BJ (cell line): ENCODE measurements at regions of chr5 and their contacts with region 1.

Region 1: DNA sequence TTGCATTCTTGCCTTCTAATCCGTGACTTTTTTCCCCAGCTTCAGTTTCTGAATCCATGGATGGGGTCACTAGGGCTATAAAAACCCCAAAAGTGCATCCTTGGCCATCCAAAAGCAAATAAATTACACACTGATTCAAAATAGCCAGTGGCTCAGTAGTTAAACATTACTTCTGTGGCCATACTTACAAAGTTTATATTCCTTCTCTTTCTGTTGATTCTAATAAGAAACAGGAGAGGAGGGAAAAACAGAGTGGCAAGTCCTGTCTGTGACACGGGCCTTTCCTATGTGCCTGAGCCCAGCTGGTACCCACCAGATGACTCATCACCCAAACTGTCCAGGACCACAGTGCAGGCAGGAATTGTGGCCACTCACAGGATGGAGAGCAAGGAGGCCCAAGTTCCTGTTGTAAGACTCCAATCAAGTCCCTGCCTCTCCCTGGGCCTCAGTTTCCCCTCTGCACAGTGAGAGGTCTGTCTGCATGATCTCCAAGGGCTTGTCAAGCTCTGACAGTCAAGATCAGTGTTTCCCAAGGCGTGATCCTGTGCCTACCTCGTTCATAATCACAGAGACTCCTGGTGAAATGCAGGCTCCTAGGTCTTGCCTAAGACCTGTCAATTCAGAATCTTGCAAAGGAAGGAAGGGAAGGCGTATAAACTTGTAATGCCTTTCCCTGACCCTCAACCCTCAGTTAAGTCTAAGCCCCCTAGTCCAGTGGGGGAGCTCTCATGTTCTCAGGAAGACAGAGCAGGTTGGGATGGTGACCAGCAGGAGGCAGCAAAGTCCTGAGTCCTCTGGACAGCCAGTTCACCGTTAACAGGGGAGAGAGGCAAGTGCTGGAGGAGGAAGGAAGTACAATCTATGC is 29.5 kb downstream of the TNIP1 start:
- DNase-seq: no peak
- H3K4me3 ChIP-seq: no peak overlapping the region
- H3K27me3 ChIP-seq: no peaks in the 10 kb centered on the region
- CTCF ChIP-seq: peak; percentile 84

Region 2: GRCh38 chr5:151002250-151002649 is 49.0 kb before region 1 on chr5:
- CTCF ChIA-PET with region 1: interaction called, 13 read pairs
- POLR2A ChIA-PET with region 1: no interaction called
- DNase-seq: no peak
- H3K4me3 ChIP-seq: no peak overlapping the region
- H3K27me3 ChIP-seq: peaks cover 2% of the 10 kb centered on the region
- CTCF ChIP-seq: peak; percentile 41

Region 3: DNA sequence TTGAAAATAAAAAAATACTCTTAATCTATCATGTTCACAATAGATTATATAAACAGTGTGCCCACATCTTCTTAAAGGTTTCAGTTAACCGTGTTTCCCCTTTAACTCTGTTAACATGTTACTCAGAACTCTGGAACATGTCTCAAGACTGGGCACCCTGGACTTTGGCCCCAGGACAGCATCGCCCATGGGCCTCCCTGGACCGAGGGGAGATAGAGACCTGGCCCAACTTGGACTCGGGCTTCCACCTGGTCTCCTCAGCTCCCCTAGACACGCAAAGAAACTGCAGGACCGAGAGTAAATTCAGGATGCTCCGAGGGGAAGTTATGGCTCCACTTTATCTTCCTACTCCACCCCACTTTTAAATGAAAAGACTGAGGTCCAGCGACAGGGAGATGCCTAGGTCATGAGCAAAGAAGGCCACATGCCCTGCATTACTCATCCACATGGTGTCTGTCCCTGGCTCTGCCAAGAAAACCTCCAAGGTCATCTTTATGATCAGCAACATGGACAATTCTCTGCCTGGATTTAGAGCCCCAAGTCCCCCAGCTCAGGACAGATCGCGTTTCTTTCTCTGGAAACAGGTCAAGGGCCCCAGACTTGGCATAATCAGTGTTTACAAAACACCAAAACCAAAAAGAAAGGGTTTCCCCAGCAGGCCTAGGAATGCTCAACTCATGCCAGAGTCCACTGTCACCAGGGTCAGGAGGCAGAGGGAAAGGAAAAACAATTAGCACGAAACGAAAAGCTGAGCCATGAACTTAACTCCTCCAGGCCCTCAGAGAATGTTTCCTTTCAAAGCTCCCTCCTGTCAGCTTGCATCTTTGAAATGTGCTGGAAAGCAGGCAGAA is 13.5 kb before region 1 on chr5:
- CTCF ChIA-PET with region 1: interaction called, 76 read pairs
- POLR2A ChIA-PET with region 1: no interaction called
- DNase-seq: no peak
- H3K4me3 ChIP-seq: no peak overlapping the region
- H3K27me3 ChIP-seq: no peaks in the 10 kb centered on the region
- CTCF ChIP-seq: no peak

Region 4: GRCh38 chr5:151068433-151069197 is 17.3 kb after region 1 on chr5:
- CTCF ChIA-PET with region 1: interaction called, 37 read pairs
- POLR2A ChIA-PET with region 1: no interaction called
- DNase-seq: no peak
- H3K4me3 ChIP-seq: no peak overlapping the region
- H3K27me3 ChIP-seq: no peaks in the 10 kb centered on the region
- CTCF ChIP-seq: no peak

Region 5: DNA sequence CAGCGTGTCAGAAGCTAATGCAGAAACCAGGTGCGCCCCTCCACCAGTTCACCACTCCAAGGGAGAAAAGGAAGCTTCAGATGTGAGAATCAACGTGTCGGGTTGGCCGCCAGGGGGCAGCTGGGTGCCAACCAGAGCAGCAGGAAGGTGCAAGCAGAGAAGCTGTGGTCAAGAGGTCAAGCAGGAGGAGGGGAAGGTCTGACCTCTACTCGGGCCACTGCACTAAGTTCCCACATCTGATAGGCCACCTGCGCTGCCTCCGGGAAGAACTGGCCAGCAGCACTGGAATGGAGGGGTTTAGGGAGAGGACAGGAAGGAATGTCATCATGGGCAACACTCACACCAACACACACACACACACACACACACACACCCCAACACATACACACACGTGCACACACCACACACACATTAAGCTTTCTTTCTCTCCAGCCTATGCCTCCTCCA is 74.9 kb after region 1 on chr5:
- CTCF ChIA-PET with region 1: interaction called, 519 read pairs
- POLR2A ChIA-PET with region 1: no interaction called
- DNase-seq: no peak
- H3K4me3 ChIP-seq: no peak overlapping the region
- H3K27me3 ChIP-seq: no peaks in the 10 kb centered on the region
- CTCF ChIP-seq: peak; percentile 85

Region 6: GRCh38 chr5:151164686-151165392 is 113.5 kb after region 1 on chr5:
- CTCF ChIA-PET with region 1: interaction called, 65 read pairs
- POLR2A ChIA-PET with region 1: no interaction called
- DNase-seq: no peak
- H3K4me3 ChIP-seq: no peak overlapping the region
- H3K27me3 ChIP-seq: peaks cover 1% of the 10 kb centered on the region; the same call in 1 of the 2 replicates
- CTCF ChIP-seq: peak; percentile 92